CD8-positive, alpha-beta T cell (primary cell): ENCODE measurements at regions of chr9 and their contacts with region 1.

Region 1: DNA sequence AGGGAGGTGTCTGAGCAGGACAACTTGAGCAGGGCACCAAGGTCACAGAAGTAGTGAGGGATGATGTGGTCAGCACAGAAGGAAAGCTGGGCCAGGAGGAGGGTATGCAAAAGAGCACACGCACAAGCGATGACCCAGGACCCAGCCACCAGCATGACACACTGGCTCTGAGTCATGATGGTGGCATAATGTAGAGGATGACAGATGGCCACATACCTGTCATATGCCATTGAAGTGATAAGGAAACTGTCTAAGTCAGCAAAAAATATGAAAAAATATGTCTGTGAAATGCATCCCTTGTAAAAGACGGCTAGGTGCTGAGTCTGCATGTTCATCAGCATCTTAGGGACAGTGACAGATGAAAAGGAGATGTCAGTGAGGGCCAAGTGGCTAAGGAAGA is 380 bp downstream of the OR1J1 start:
- DNase-seq: no peak
- ATAC-seq: no peak
- H3K4me3 ChIP-seq: no peak overlapping the region
- H3K4me3 Mint-ChIP-seq: no peak overlapping the region
- H3K27ac ChIP-seq: no peak overlapping the region
- H3K27ac Mint-ChIP-seq: no peak overlapping the region
- H3K4me1 ChIP-seq: no peaks in the 10 kb centered on the region
- H3K4me1 Mint-ChIP-seq: no peaks in the 10 kb centered on the region
- H3K27me3 ChIP-seq: no peaks in the 10 kb centered on the region
- H3K27me3 Mint-ChIP-seq: peaks cover 38% of the 10 kb centered on the region
- CTCF ChIP-seq: no peak

Region 2: GRCh38 chr9:122860317-122861142 is 383.2 kb after region 1 on chr9:
- CTCF ChIA-PET with region 1: no interaction called
- POLR2A ChIA-PET with region 1: no interaction called
- intact Hi-C with region 1: no loop called
- DNase-seq: no peak
- ATAC-seq: no peak
- H3K4me3 ChIP-seq: no peak overlapping the region
- H3K4me3 Mint-ChIP-seq: no peak overlapping the region
- H3K27ac ChIP-seq: no peak overlapping the region
- H3K27ac Mint-ChIP-seq: no peak overlapping the region
- H3K4me1 ChIP-seq: no peaks in the 10 kb centered on the region
- H3K4me1 Mint-ChIP-seq: no peaks in the 10 kb centered on the region
- H3K27me3 ChIP-seq: no peaks in the 10 kb centered on the region
- H3K27me3 Mint-ChIP-seq: no peaks in the 10 kb centered on the region
- CTCF ChIP-seq: no peak

Region 3: DNA sequence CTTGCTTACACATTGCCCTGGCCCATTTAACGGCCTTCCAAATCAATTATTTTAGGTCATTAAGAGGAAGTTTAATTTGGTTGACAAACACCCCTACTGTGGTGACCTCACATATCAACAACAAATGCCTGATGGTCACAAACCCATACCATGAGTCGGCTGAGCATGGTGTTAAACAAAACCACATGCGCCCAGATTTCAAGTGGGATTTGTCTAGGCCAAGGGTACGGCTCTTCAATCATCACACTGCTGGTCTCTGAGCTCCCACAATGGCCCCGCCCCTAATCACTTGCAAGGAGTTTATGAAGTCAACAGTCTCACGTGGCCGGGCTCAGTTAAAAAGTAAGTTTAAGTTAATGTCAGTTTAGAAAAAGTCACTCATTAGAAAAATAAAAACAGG is 1122.4 kb after region 1 on chr9:
- CTCF ChIA-PET with region 1: no interaction called
- POLR2A ChIA-PET with region 1: no interaction called
- intact Hi-C with region 1: loop called in 1 of 2 experiments (anchors 5 kb)
- DNase-seq: no peak
- ATAC-seq: no peak
- H3K4me3 ChIP-seq: no peak overlapping the region
- H3K4me3 Mint-ChIP-seq: no peak overlapping the region
- H3K27ac ChIP-seq: no peak overlapping the region
- H3K27ac Mint-ChIP-seq: no peak overlapping the region
- H3K4me1 ChIP-seq: no peaks in the 10 kb centered on the region
- H3K4me1 Mint-ChIP-seq: no peaks in the 10 kb centered on the region
- H3K27me3 ChIP-seq: no peaks in the 10 kb centered on the region
- H3K27me3 Mint-ChIP-seq: no peaks in the 10 kb centered on the region
- CTCF ChIP-seq: no peak